Thyroid gland (tissue), 4 donors: ENCODE measurements at regions of chr5 and their contacts with region 1.

Region 1: DNA sequence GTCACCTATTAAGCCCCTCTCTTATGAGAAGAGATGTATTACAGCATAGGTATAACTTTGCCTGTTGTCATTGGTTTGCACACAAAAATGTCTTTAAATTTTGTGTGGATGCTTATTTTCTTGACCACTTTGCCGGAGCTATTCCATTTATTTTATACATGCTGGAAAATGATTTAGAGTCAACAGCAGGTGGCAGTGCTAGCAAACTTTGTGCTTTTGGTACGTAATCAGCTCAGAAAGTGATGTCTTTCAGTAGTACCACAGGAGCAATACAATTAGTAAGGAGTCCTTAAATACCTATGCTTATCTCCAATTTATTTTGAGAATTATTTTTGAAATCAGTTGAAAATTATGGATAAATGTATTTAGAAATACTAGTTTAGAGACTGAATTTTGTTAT is 19.8 kb upstream of the NUDT12 start:
- DNase-seq: peak; percentile 5 to 10
- H3K4me3 ChIP-seq: no peak overlapping the region
- H3K27ac ChIP-seq: no peak overlapping the region
- H3K4me1 ChIP-seq: no peaks in the 10 kb centered on the region
- H3K27me3 ChIP-seq: no peaks in the 10 kb centered on the region
- CTCF ChIP-seq: peak in 5 of 6 experiments; percentile 16 to 52 (median 47)
- POLR2A ChIP-seq: no peak

Region 2: GRCh38 chr5:104178829-104179456 is 596.6 kb after region 1 on chr5:
- intact Hi-C with region 1: loop called (anchors 10 kb)
- DNase-seq: peak; percentile 7 to 12
- H3K4me3 ChIP-seq: no peak overlapping the region
- H3K27ac ChIP-seq: no peak overlapping the region
- H3K4me1 ChIP-seq: no peaks in the 10 kb centered on the region
- H3K27me3 ChIP-seq: no peaks in the 10 kb centered on the region
- CTCF ChIP-seq: peak in 4 of 6 experiments; percentile 28 to 37 (median 29)
- POLR2A ChIP-seq: no peak